SK-MEL-5 (cell line): ENCODE measurements at regions of chr7 and their contacts with region 1.

Region 1: DNA sequence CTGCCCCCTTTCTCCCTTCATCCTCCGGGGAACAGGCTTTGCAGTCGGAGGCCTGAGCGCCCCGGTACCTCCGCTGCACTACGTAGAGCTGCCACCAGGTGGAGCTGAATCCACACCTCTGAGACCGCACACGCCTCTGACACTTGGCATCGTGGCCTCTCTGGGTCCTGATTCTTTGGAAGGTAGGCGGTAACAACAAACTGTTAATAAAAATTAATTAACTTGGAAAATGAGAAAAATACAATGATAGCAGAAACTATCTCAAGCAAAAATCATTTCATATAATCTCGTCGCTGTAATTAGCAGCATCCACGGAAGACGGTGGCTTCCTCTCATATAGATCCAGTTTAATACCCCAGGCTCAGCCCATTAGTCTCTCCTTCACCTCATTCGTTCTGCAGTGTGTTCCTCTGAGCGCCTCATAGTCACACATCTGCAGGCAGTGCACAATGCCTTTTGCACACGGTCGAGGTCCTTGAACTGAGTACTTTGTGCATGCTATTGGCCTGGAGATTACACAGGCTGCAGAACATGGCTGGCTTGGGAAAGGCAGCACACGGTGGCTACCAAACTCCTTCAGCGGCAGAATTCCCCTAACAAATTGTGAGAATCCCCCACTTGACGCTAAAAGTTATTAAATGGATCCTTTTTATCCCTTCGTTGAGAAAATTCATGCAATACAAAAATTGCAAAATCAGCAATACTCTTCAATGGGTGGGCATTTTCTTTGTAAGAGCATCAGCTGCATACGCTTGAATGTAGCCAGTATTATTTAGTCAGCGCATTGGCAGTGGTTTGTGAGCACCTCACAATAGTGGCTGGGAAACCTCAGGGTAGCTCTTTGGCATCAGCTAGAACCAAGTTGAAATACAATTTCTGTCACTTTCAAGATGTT is 18.7 kb downstream of the OR9A2 start:
- DNase-seq: peak; percentile 85

Region 2: DNA sequence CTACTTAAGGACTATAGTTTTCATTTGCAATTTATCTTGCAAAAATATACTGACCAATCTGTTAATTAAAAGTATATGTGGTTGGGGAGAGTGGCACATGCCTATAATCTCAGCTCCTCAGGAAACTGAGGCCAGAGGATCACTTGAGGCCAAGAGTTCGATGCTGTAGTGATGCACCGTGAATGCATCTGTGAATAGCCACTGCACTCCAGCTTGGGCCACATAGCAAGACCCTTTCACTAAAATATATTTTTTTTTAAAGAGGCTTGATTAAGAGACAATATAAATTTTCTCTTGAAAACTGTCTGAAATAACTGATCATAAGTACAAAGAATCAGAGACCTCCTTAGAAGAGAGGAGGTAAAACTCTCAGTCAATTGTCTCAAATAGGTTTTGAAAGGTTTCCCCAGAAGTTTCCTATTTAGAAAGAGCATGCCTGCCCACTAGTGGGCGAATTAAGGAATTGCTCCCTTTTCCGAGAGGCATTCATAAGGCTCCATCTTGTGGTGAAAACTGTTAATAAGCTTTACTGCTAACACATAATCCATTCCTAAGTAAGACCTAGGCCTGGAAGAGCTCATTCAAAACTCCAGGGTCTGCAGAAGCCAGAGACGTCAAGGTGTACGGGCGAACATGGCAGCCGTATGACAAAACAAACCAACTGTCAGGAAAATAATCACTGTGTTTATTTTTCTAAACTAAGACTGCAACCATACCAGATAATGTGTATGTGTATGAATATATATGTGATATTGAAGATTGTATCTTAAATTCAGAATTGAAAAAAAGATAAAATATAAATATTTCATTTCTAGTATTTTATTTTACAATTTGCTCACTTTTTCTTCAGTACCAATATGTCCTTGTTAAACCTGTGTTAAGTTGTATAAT is 206.8 kb after region 1 on chr7:
- in situ Hi-C with region 1: loop called (anchors 25 kb)
- DNase-seq: peak; percentile 93